Naive thymus-derived CD8-positive, alpha-beta T cell (primary cell): ENCODE measurements at regions of chr6 and their contacts with region 1.

Region 1: DNA sequence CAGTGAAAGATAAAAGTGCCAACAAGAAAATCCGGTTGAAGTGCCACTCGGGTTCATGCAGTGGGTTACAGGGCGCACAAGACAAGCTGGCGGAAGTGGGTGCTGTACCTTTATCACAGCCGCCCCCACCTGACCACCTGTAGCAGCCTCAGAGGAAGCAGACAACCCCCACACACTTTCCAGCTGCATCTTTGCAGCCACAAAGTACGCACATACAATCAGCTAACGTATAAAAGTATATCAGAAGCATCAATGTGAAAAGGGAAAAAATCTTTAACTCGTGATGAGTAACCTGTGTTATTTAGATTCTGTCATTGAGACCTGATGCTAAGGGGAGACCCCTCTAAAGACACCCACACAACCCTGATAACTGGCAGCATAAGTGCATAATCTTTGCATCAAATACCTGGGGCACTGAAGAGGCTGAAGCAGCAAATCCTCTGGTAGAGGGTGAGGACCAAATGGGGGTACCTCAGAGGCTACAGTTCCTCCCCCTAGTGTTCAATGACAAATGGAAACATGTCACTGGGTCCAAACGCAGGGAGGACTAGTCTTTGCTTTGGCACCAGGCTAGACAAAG is 22.1 kb downstream of the BACH2 start:
- DNase-seq: peak; percentile 75 to 98 (median 94)
- ATAC-seq: peak; percentile 88 to 90
- H3K4me3 Mint-ChIP-seq: peak overlapping the region; percentile 63 to 88 (median 81)
- H3K27ac Mint-ChIP-seq: peak overlapping the region; percentile 83 to 100 (median 98)
- H3K4me1 Mint-ChIP-seq: peaks cover 47 to 95% (median 86%) of the 10 kb centered on the region in 4 donors
- H3K27me3 Mint-ChIP-seq: no peaks in the 10 kb centered on the region

Region 2: DNA sequence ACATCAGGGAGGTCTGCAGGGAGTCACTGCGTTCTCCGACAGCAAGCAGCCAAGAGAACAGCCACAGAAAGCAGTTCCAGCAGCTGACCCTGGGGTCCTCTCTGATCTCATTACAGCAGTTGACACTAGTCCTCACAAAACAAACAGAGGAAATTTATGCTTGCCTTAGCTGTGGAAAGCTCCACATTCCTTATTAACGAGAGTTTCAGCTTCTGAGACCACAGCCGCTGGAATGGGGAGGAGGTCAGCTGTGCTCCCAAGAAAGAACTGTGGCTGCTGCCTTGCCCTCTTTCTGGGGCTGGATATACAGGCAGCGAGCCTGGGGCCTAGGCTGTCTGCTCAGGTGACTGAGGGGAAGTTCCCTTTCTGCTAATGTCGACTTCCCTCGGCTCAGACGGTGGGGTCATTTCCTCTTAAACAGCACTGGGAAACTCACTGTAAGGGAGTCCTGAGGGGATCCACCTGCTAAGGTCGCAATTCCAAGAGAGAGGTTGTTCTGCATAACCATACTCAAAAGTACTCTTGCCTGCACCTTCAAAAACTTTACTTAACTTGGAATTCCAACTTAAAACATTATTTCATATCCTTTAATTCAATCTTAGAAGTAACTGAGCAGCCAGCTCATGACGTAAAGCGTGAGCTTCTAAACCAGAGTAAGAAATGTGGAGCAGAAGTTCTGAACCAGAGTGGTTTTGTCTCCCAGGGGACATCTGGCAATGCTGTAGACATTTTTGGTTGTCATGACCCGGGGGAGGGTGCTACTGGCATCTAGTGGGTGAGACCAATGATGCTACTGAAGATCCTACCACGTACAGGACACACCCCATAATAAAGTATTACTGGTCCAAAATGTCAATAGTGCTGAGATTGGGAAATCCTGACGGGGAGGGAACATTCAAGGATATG is 58.2 kb before region 1 on chr6:
- POLR2A ChIA-PET with region 1: interaction called, 42 read pairs
- DNase-seq: peak; percentile 34 to 76 (median 63)
- ATAC-seq: peak; percentile 36 to 64
- H3K4me3 Mint-ChIP-seq: peak overlapping the region in 8 of 10 donors; percentile 52 to 79 (median 71)
- H3K27ac Mint-ChIP-seq: no peak overlapping the region
- H3K4me1 Mint-ChIP-seq: peaks cover 24 to 37% (median 31%) of the 10 kb centered on the region in 4 donors
- H3K27me3 Mint-ChIP-seq: no peaks in the 10 kb centered on the region

Region 3: DNA sequence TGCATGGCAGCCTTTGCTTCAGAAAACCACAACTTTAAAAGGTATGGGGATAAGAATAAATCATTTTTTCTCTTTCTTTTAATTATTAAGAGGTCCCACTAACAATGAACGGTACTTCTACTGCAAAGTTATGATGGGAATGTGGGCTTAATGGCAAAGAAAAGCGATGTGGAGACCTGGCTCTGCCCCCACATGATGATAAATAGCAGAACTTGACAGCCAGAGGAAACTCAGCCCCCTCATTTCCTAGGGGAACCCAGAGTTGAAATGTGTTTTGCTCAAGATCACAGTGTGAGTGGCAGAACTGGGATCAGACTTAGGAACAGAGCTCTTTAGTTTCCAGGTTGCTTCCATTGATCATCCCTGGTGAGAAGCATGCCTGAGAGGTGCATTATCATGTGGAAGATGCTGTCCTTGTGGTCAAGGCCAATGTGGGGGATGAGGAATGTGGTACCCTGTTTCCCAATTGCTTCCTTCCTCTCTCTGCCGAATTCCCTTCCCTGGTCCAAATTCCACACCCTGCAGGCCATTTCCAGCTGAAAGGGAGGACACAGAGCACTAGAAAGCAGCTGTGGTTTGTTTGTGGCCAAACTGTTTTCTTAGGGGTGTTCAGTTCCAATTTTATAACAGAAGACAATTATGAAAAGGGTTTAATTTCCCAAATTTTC is 43.9 kb before region 1 on chr6:
- POLR2A ChIA-PET with region 1: interaction called, 14 read pairs
- DNase-seq: no peak
- ATAC-seq: no peak
- H3K4me3 Mint-ChIP-seq: peak overlapping the region in 9 of 10 donors; percentile 16 to 85 (median 61)
- H3K27ac Mint-ChIP-seq: peak overlapping the region; percentile 92 to 99 (median 96)
- H3K4me1 Mint-ChIP-seq: peaks cover 65 to 100% (median 97%) of the 10 kb centered on the region in 4 donors
- H3K27me3 Mint-ChIP-seq: no peaks in the 10 kb centered on the region

Region 4: GRCh38 chr6:90256698-90257485 is 17.6 kb before region 1 on chr6:
- POLR2A ChIA-PET with region 1: interaction called, 10 read pairs
- DNase-seq: peak in 5 of 10 donors; percentile 35 to 79 (median 72)
- ATAC-seq: peak; percentile 75 to 98
- H3K4me3 Mint-ChIP-seq: peak overlapping the region in 8 of 10 donors; percentile 1 to 62 (median 30)
- H3K27ac Mint-ChIP-seq: peak overlapping the region; percentile 19 to 98 (median 90)
- H3K4me1 Mint-ChIP-seq: peaks cover 40 to 94% (median 92%) of the 10 kb centered on the region in 4 donors
- H3K27me3 Mint-ChIP-seq: no peaks in the 10 kb centered on the region

Region 5: GRCh38 chr6:90263633-90264032 is 10.9 kb before region 1 on chr6:
- POLR2A ChIA-PET with region 1: interaction called, 19 read pairs
- DNase-seq: no peak
- ATAC-seq: no peak
- H3K4me3 Mint-ChIP-seq: peak overlapping the region in 6 of 10 donors; percentile 28 to 70 (median 48)
- H3K27ac Mint-ChIP-seq: peak overlapping the region; percentile 14 to 99 (median 92)
- H3K4me1 Mint-ChIP-seq: peaks cover 43 to 96% (median 94%) of the 10 kb centered on the region in 4 donors
- H3K27me3 Mint-ChIP-seq: no peaks in the 10 kb centered on the region

Region 6: DNA sequence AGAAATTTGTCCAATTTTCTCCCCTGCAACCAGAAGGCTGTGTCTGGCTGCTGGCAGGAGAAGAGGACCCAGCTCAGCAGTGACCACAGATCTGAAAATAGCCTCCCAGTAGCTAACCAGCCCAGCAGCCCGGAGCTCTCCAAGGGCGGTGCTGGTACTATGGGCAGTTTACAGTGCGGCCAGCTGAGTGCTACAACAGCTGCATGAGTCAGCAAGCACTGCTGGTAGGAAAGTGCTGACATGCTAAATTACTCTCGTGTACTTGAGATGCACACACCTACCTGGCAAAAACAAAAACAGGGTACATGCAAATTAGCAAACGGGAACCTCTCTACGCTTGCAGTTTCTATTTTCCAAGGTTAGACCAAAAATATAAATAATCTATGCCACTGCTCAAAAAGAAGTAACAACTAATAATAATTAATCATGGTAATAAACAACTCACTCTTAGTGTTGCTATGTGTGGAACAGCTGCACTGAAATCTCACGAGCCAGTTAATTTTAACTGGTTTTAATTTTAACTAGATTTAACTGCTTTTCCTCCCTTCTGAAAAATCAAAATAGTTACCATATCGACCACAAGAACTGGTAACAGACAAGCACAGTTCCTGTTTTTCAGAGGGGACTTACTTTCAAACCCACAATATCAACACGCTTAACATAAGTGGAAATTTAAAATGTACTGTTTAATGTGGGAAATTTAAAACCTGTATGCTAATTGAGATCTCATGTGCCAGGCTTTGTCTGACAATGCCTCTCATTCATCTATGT is 11.3 kb after region 1 on chr6:
- POLR2A ChIA-PET with region 1: interaction called, 97 read pairs
- DNase-seq: peak in 7 of 10 donors; percentile 37 to 87 (median 66)
- ATAC-seq: peak; percentile 60 to 72
- H3K4me3 Mint-ChIP-seq: peak overlapping the region; percentile 76 to 95 (median 86)
- H3K27ac Mint-ChIP-seq: peak overlapping the region; percentile 89 to 99 (median 94)
- H3K4me1 Mint-ChIP-seq: peaks cover 58 to 95% (median 92%) of the 10 kb centered on the region in 4 donors
- H3K27me3 Mint-ChIP-seq: no peaks in the 10 kb centered on the region

Region 7: DNA sequence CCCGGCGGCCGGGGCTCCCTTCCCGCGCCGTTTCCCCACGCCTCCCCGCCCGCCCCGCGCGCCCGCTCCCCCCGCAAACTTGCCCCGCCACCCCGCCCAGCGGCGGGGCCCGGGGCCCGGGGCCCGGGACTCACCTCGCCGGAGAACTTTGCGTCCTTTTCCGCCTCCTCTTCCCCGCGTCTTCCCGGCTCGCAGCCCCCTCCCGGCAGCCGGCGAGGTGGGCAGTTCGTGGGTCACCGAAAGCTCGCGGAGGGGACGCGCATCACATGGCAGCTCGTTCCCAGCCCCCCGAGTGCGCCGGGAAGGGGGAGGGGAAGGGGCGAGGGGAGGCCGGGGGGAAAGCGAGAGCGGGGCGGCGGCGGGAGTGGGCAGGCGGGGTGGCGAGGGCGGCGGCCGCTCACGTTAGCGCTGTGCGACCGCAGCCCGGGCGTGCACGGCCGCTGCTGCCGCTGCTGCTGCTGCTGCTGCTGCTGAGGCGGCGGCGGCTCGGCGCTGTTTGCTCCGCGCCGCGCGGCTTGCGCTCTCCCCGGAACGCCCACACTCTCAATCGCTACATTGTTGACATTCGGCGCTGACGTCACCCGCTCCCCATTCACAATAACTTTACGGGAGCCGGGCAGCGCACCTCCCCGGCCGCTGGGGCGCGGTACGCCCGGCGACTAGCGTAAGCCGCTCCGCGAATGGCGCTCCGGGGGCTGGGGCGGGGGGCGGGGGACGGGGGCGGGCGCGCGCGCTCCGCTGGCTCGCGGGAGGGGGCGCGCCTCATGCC is 22.0 kb after region 1 on chr6 and contains the start of gene BACH2:
- POLR2A ChIA-PET with region 1: interaction called, 52 read pairs
- DNase-seq: peak; percentile 87 to 98 (median 95)
- ATAC-seq: peak; percentile 69 to 73
- H3K4me3 Mint-ChIP-seq: peak within 1 kb of the TSS; percentile 84 to 99 (median 92)
- H3K27ac Mint-ChIP-seq: peak within 1 kb of the TSS; percentile 89 to 99 (median 97)
- H3K4me1 Mint-ChIP-seq: peaks cover 16 to 46% (median 34%) of the 10 kb centered on the region in 4 donors
- H3K27me3 Mint-ChIP-seq: no peaks in the 10 kb centered on the region
- polyA plus RNA-seq, gene BACH2: 17.5 to 29.3 (median 21.7) TPM

Region 8: GRCh38 chr6:90343581-90343980 is 69.0 kb after region 1 on chr6:
- POLR2A ChIA-PET with region 1: no interaction called
- DNase-seq: no peak
- ATAC-seq: no peak
- H3K4me3 Mint-ChIP-seq: no peak overlapping the region
- H3K27ac Mint-ChIP-seq: no peak overlapping the region
- H3K4me1 Mint-ChIP-seq: peaks cover 0 to 5% (median under 1%) of the 10 kb centered on the region in 4 donors
- H3K27me3 Mint-ChIP-seq: no peaks in the 10 kb centered on the region